Psoas muscle (tissue), 8 donors: ENCODE measurements at regions of chr19 and their contacts with region 1.

Region 1: GRCh38 chr19:6737284-6738046 is at the start of gene GPR108:
- DNase-seq: peak; percentile 100
- ATAC-seq: peak; percentile 78 to 83 (median 79)
- H3K4me3 ChIP-seq: peak within 1 kb of the TSS; percentile 83
- H3K27ac ChIP-seq: peak within 1 kb of the TSS; percentile 94
- H3K4me1 ChIP-seq: peaks cover 32% of the 10 kb centered on the region
- H3K27me3 ChIP-seq: no peaks in the 10 kb centered on the region
- CTCF ChIP-seq: no peak
- total RNA-seq, gene GPR108: 12.5 to 27.8 (median 21.3) TPM

Region 2: DNA sequence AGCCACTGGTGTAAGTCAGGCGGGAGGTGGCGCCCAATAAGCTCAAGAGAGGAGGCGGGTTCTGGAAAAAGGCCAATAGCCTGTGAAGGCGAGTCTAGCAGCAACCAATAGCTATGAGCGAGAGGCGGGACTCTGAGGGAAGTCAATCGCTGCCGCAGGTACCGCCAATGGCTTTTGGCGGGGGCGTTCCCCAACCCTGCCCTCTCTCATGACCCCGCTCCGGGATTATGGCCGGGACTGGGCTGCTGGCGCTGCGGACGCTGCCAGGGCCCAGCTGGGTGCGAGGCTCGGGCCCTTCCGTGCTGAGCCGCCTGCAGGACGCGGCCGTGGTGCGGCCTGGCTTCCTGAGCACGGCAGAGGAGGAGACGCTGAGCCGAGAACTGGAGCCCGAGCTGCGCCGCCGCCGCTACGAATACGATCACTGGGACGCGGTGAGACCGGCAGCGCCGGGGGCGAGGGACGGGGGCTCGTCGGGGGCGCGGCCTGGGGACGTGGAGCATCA is 364.8 kb before region 1 on chr19 and contains the start of gene ALKBH7:
- intact Hi-C with region 1: loop called in 1 of 2 experiments (anchors 10 kb)
- DNase-seq: peak; percentile 96 to 98
- ATAC-seq: peak; percentile 87 to 92 (median 89)
- H3K4me3 ChIP-seq: peak within 1 kb of the TSS; percentile 90
- H3K27ac ChIP-seq: peak within 1 kb of the TSS; percentile 98
- H3K4me1 ChIP-seq: no peaks in the 10 kb centered on the region
- H3K27me3 ChIP-seq: no peaks in the 10 kb centered on the region
- CTCF ChIP-seq: no peak
- total RNA-seq, gene ALKBH7: 72.3 to 120 (median 96.8) TPM

Region 3: GRCh38 chr19:6516659-6517291 is 220.7 kb before region 1 on chr19:
- intact Hi-C with region 1: loop called (anchors 1 to 5 kb)
- DNase-seq: peak; percentile 93 to 95
- ATAC-seq: peak; percentile 90 to 95 (median 90)
- H3K4me3 ChIP-seq: peak overlapping the region; percentile 83
- H3K27ac ChIP-seq: peak overlapping the region; percentile 85
- H3K4me1 ChIP-seq: peaks cover 16% of the 10 kb centered on the region
- H3K27me3 ChIP-seq: no peaks in the 10 kb centered on the region
- CTCF ChIP-seq: peak; percentile 90

Region 4: GRCh38 chr19:6530386-6531161 is 206.9 kb before region 1 on chr19 and contains the start of gene TNFSF9:
- intact Hi-C with region 1: loop called in 1 of 2 experiments (anchors 5 kb)
- DNase-seq: peak; percentile 88 to 94
- ATAC-seq: peak; percentile 95 to 98 (median 98)
- H3K4me3 ChIP-seq: peak within 1 kb of the TSS; percentile 74
- H3K27ac ChIP-seq: peak within 1 kb of the TSS; percentile 81
- H3K4me1 ChIP-seq: peaks cover 7% of the 10 kb centered on the region
- H3K27me3 ChIP-seq: peaks cover 0 to 22% (median 15%) of the 10 kb centered on the region in 3 donors
- CTCF ChIP-seq: no peak
- total RNA-seq, gene TNFSF9: 0.66 to 1.9 (median 1.2) TPM in 3 of 4 donors, not detected in the other

Region 5: DNA sequence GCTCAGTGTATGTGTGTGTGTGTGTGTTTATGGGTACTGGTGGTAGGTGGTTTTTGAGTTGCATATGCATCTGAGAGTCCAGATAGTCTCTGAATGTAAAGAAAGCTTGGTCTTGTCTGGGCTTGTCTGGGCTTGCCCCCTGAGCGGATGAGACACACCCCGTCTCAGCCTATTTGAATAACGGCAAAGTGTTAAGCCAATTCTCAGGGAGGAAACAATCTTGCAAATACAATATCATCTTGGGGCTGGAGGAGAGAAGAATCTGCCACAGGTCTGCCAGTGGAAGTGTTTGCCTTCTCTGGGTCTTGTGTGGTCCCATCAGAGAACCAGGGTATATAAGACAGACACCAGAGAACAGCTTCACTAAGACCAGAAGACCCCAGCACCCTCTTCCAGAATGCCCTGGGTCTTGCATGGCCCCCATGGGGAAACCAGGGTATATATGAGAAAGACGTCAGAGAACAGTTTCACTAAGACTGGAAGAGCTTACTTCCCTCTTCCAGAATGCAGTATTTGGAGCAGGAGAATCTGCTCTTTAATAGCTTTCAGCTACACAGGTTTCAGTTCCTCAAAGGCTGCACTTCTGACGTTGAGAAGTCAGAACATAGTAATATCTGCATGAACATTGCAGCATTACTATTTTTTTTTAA is 159.9 kb before region 1 on chr19:
- intact Hi-C with region 1: no loop called
- DNase-seq: no peak
- ATAC-seq: no peak
- H3K4me3 ChIP-seq: no peak overlapping the region
- H3K27ac ChIP-seq: no peak overlapping the region
- H3K4me1 ChIP-seq: no peaks in the 10 kb centered on the region
- H3K27me3 ChIP-seq: peaks cover 0 to 2% (median 2%) of the 10 kb centered on the region in 3 donors
- CTCF ChIP-seq: no peak

Region 6: DNA sequence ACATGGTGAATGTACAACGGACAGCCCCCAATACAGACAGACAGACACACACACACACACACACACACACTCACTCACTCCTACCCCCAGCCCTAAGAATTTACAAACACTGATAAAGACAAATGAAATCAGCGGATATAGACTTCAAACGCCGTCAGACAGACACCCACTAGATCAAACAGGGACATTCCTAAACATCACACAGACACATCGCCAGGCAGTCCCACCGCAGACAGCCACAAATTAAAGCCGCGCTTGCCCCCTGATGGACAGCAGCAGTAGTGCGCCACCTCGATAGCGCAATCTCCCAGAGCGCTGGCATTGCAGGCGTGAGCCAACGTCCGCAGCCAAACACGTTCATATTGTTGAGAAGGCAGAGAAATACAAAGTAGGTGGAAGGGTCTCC is 125.2 kb after region 1 on chr19:
- intact Hi-C with region 1: loop called in 1 of 2 experiments (anchors 1 kb)
- DNase-seq: peak; percentile 73 to 86
- ATAC-seq: peak; percentile 84 to 95 (median 87)
- H3K4me3 ChIP-seq: peak overlapping the region; percentile 40
- H3K27ac ChIP-seq: no peak overlapping the region
- H3K4me1 ChIP-seq: no peaks in the 10 kb centered on the region
- H3K27me3 ChIP-seq: peaks cover 0 to 5% (median 0%) of the 10 kb centered on the region in 3 donors
- CTCF ChIP-seq: peak; percentile 75